Gastrocnemius medialis (tissue), 4 donors: ENCODE measurements at regions of chr20 and their contacts with region 1.

Region 1: GRCh38 chr20:43448748-43449535 is 8.8 kb upstream of the SRSF6 start:
- DNase-seq: no peak
- ATAC-seq: peak in 1 of 2 donors; percentile 39
- H3K4me3 ChIP-seq: no peak overlapping the region
- H3K27ac ChIP-seq: no peak overlapping the region
- H3K4me1 ChIP-seq: no peaks in the 10 kb centered on the region
- H3K27me3 ChIP-seq: peaks cover 0 to 4% (median 0%) of the 10 kb centered on the region in 3 donors
- CTCF ChIP-seq: peak; percentile 40 to 68 (median 59)
- POLR2A ChIP-seq: no peak

Region 2: GRCh38 chr20:43349846-43350245 is 99.1 kb before region 1 on chr20:
- in situ Hi-C with region 1: no loop called
- intact Hi-C with region 1: no loop called
- DNase-seq: no peak
- ATAC-seq: no peak
- H3K4me3 ChIP-seq: no peak overlapping the region
- H3K27ac ChIP-seq: no peak overlapping the region
- H3K4me1 ChIP-seq: no peaks in the 10 kb centered on the region
- H3K27me3 ChIP-seq: no peaks in the 10 kb centered on the region
- CTCF ChIP-seq: no peak
- POLR2A ChIP-seq: no peak

Region 3: GRCh38 chr20:43583982-43584432 is 135.1 kb after region 1 on chr20:
- in situ Hi-C with region 1: loop called in 1 of 4 experiments (anchors 5 kb)
- intact Hi-C with region 1: no loop called
- DNase-seq: peak in 1 of 2 donors; percentile 36
- ATAC-seq: no peak
- H3K4me3 ChIP-seq: no peak overlapping the region
- H3K27ac ChIP-seq: no peak overlapping the region
- H3K4me1 ChIP-seq: no peaks in the 10 kb centered on the region
- H3K27me3 ChIP-seq: no peaks in the 10 kb centered on the region
- CTCF ChIP-seq: no peak
- POLR2A ChIP-seq: no peak

Region 4: DNA sequence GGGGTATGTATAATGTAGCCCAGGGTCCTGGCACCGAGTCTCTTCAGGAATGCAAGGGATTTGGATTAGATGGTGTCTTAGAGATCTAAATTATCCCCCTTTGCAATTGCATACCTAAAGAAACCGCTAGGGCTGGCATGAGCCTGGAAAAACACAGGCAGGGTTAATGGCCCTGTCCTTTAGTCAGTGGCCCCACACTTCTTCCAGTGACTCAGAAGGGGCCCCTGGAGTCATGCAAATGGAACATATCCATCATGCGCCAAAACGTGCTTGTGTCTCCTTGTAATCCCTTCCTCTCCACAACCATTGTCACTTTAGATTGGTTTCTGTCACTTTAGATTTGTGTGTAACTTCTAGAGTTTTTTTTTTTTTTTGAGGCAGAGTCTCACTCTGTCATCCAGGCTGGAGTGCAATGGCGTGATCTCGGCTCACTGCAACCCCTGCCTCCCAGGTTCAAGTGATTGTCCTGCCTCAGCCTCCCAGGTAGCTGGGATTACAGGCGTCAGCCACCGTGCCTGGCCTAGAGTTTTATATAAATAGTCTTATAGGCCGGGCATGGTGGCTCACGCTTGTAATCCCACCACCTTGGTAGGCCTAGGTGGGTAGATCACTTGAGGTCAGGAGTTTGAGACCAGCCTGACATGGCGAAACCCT is 209.3 kb after region 1 on chr20:
- in situ Hi-C with region 1: no loop called
- intact Hi-C with region 1: no loop called
- DNase-seq: no peak
- ATAC-seq: no peak
- H3K4me3 ChIP-seq: peak overlapping the region; percentile 62 to 76 (median 74)
- H3K27ac ChIP-seq: no peak overlapping the region
- H3K4me1 ChIP-seq: peaks cover 4 to 10% of the 10 kb centered on the region in 2 donors
- H3K27me3 ChIP-seq: no peaks in the 10 kb centered on the region
- CTCF ChIP-seq: no peak
- POLR2A ChIP-seq: no peak

Region 5: DNA sequence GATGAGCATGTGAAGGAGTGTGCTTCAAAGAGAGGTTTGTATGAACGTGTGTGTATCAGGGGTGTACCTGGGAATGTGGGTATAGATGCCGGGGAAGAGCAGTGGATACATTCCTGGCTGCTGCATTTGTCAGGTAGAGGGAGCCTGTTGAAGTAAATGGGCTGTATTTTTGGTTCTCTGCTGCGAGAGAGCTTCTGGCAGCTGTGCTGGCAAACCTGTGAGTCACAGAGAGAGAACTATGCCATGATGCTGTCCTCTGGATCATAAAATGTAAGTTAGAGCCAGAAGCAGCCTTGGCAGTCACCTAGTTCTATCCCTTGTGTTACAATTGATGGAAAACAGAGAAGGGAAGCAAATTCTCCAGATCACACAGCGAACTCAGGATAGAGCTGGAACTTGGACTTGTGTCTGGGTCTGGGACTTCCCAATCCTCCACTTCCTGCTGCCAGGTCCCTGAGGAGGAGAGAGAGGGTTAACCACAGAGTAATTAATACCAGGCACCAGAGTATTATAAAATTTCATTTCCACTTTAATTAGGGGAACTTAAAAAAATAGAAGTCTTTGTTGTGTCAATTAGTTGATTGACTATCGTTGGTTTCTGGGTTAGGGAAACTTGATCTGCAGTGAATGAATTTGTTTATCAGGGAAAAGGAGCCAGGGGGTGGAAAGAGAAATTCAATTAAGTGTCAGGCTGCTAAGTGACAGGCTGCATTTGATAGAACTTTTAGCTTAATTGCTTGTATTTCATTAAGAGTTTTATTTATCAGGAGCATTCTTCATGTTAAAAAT is 318.9 kb after region 1 on chr20:
- in situ Hi-C with region 1: no loop called
- intact Hi-C with region 1: no loop called
- DNase-seq: no peak
- ATAC-seq: no peak
- H3K4me3 ChIP-seq: no peak overlapping the region
- H3K27ac ChIP-seq: no peak overlapping the region
- H3K4me1 ChIP-seq: no peaks in the 10 kb centered on the region
- H3K27me3 ChIP-seq: peaks cover 8 to 31% (median 12%) of the 10 kb centered on the region in 3 donors
- CTCF ChIP-seq: no peak
- POLR2A ChIP-seq: no peak

Region 6: GRCh38 chr20:44080646-44081267 is 631.8 kb after region 1 on chr20:
- in situ Hi-C with region 1: loop called in 2 of 4 experiments (anchors 25 kb)
- intact Hi-C with region 1: loop called (anchors 2 kb)
- DNase-seq: peak; percentile 43 to 57
- ATAC-seq: peak; percentile 59 to 79
- H3K4me3 ChIP-seq: no peak overlapping the region
- H3K27ac ChIP-seq: no peak overlapping the region
- H3K4me1 ChIP-seq: peaks cover 12 to 16% of the 10 kb centered on the region in 2 donors
- H3K27me3 ChIP-seq: no peaks in the 10 kb centered on the region
- CTCF ChIP-seq: peak; percentile 92 to 97 (median 94)
- POLR2A ChIP-seq: no peak